Calu3 (cell line): ENCODE measurements at regions of chrX and their contacts with region 1.

Region 1: DNA sequence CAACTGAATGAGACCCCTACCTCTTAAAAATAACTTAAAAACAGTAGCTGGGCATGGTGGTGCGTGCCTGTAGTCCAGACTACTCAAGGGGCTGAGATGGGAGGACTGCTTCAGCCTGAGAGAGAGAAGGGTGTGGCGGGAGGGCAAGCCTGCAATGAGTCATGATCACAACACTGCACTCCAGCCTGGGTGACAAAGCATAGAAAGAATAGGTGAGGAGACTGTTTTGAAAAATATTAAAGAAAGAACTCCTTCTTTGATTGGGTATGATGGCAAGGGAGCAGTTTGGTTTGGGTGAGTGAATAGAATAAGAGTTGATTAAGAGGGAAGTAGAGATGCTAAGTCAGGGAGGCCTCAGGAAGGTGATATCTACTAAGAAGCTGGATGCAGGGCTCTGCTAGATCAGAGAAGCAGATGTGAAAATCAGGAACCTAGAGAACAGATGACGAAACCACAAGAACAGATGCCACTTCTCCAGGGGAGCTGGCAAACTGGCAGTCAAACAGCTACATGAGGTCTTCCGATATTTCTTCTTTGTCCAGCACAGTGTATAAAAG is 318.6 kb downstream of the OPHN1 start:
- DNase-seq: peak; percentile 57
- H3K4me3 Mint-ChIP-seq: no peak overlapping the region
- H3K27ac Mint-ChIP-seq: no peak overlapping the region
- H3K4me1 Mint-ChIP-seq: peaks cover 16% of the 10 kb centered on the region
- H3K27me3 Mint-ChIP-seq: no peaks in the 10 kb centered on the region
- CTCF ChIP-seq: no peak

Region 2: GRCh38 chrX:68059469-68059868 is 55.2 kb before region 1 on chrX:
- CTCF ChIA-PET with region 1: no interaction called
- intact Hi-C with region 1: loop called (anchors 10 kb)
- DNase-seq: no peak
- H3K4me3 Mint-ChIP-seq: no peak overlapping the region
- H3K27ac Mint-ChIP-seq: no peak overlapping the region
- H3K4me1 Mint-ChIP-seq: peaks cover 8% of the 10 kb centered on the region
- H3K27me3 Mint-ChIP-seq: no peaks in the 10 kb centered on the region
- CTCF ChIP-seq: no peak

Region 3: GRCh38 chrX:68175562-68175961 is 60.9 kb after region 1 on chrX:
- CTCF ChIA-PET with region 1: no interaction called
- intact Hi-C with region 1: no loop called
- DNase-seq: no peak
- H3K4me3 Mint-ChIP-seq: no peak overlapping the region
- H3K27ac Mint-ChIP-seq: no peak overlapping the region
- H3K4me1 Mint-ChIP-seq: no peaks in the 10 kb centered on the region
- H3K27me3 Mint-ChIP-seq: no peaks in the 10 kb centered on the region
- CTCF ChIP-seq: no peak